Dendritic cell treated with granulocyte-macrophage colony-stimulating factor and Interleukin-4, amounts not matched to agents 40 ng/mL and 50 ng/mL, for 4 days (primary cell): ENCODE measurements at regions of chr9 and their contacts with region 1.

Region 1: DNA sequence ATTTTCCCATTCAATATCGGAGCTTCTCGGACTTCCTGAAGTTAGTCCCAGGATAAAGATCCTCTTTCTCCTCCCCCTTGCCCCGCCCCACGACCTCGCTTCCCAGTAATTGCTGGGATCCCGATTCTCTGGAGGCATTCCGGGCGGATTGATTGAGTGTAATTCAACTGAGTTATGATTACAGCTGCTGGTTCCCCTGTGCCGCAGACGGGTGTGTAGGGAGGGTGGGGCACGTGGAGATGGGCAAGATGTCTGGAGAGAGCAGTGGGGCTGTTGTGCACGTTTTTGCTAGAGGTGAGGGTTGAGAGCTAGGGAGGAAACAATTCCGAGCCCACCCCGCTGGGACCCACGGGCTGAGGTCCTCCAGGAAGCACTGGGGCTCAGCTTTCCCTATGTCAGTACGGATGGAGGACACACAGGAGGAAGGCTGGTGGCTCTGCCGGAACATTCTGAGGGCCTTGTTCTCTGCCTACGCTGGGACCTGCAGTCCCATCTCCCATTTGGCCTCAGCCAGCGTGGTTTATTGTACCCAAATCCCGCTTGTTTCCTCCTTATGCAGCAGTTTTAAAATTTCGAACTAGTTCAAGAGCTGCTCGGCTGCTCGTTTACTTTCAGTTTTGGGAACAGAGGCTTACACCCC is 2.4 kb upstream of the DMRT2 start:
- H3K4me3 Mint-ChIP-seq: peak overlapping the region; percentile 84
- H3K27ac Mint-ChIP-seq: no peak overlapping the region
- H3K4me1 Mint-ChIP-seq: peaks cover 62% of the 10 kb centered on the region
- H3K27me3 Mint-ChIP-seq: peaks cover 97% of the 10 kb centered on the region

Region 2: GRCh38 chr9:971901-972500 is 75.7 kb before region 1 on chr9:
- intact Hi-C with region 1: loop called (anchors 5 kb)
- H3K4me3 Mint-ChIP-seq: peak overlapping the region; percentile 72
- H3K27ac Mint-ChIP-seq: no peak overlapping the region
- H3K4me1 Mint-ChIP-seq: peaks cover 71% of the 10 kb centered on the region
- H3K27me3 Mint-ChIP-seq: peaks cover 94% of the 10 kb centered on the region